ENCODE measurements at regions of chr1 and their contacts with region 1.

Region 1: DNA sequence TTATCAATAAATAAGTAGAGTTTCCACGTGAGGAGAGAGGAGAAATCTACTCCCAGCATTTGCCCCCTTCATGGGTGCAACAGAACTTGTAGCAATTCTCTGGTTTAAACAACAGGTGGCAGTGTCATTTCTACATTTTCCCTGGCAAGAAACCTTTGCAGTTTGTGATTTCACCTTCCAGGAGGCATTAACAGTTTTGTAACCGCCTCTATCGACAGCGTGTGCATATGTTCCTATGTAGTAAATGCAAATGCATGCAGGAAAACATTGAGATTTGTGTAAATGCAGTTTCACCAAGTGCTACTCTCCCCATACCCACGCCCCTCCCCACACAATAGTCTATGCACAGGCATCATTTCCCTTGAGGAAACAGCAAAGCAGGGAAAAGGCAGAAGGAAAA is 494.7 kb downstream of the SMYD3 start:
- DNase-seq: no peak

Region 2: DNA sequence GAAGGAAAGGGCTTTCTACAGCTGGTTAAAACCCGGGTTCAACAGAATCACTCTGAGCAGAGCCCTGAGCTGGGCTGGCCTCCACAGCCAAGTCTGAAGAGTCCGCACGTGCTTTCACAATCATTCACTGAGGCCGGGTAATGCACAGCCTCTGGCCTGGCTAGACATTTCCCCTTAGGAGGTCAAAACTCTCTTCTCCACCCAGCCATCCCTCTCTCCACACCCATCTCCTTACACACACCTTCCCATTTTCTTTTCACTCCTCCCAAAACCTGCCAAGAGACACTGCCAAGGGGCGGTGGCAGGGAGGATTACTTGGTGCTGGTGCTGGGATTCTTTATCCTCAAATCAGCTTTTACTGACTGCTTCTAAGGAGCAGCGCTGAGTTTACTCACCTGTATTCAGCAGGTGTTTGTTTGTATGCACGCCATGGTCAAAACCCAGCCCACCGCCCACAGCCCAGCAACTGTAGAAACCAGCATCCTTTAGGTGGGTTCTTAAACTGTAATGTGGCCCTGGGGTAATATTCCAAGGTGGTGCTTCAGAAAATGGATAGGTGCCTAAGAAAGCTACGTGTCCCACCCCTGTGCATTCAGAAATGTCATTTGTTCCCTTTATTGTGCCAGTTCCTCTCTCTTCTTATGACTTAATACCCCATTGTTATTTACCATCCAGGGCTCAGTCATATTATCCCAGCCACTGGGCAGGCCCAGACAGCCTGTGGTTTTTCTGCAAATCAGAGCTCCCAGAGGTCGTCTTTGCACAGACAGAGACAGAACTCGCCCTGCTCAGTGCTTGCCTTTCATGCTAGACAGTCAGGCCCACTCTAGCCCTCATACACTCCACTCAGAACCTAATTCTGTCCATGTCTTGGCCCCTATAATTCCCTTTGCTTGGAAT is 1640.8 kb before region 1 on chr1:
- intact Hi-C with region 1: loop called in 1 of 2 experiments (anchors 5 kb)
- DNase-seq: no peak

Region 3: GRCh38 chr1:245698860-245699259 is 313.5 kb before region 1 on chr1:
- intact Hi-C with region 1: no loop called
- DNase-seq: no peak

Region 4: DNA sequence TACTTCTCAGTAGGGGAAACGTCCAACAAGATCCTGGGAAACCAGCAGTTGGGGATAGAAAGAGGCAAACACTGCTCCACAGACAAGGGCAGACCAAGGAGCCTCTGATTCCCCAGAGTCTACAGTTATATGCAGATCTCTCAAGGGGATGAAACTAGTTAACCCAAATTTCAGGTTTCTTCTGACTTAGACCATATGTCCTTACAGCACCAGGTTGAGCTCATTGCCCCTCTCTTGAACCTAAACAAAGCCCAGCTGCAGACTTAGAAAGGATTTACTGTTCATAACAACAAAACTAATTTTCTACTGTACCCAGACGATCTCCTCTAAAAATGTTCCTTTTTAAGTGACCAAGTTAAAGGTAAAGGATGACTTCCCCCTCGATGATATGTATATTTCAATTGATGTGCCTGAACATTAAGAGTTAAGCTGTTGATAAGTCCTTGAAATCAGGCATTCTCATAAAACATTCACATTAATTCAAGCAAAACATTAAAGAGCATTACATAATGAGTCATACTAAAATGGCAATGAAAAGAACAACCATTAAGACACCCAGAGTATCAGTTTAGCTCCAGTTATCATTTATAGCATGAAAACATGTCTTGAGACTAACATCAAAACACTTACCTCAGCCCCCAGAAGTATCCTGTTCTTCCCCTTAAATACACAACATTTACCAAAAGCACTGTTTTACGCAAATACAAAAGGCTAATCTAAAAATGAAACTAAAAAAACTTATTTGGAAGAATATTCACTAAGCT is 470.6 kb after region 1 on chr1:
- intact Hi-C with region 1: loop called in 1 of 2 experiments (anchors 10 kb)
- DNase-seq: no peak

Measured in posterior vena cava (tissue), 2 donors.